ENCODE measurements at regions of chr4 and their contacts with region 1.

Region 1: GRCh38 chr4:108570993-108571569 is 49.3 kb upstream of the RPL34 start:
- DNase-seq: no peak
- H3K4me3 ChIP-seq: no peak overlapping the region
- H3K27ac ChIP-seq: no peak overlapping the region
- H3K4me1 ChIP-seq: no peaks in the 10 kb centered on the region
- H3K27me3 ChIP-seq: no peaks in the 10 kb centered on the region
- CTCF ChIP-seq: no peak

Region 2: GRCh38 chr4:108018040-108018883 is 552.8 kb before region 1 on chr4:
- CTCF ChIA-PET with region 1: interaction called, 4 read pairs
- POLR2A ChIA-PET with region 1: no interaction called
- intact Hi-C with region 1: loop called (anchors 5 kb)
- DNase-seq: peak; percentile 39 to 51
- H3K4me3 ChIP-seq: no peak overlapping the region
- H3K27ac ChIP-seq: no peak overlapping the region
- H3K4me1 ChIP-seq: no peaks in the 10 kb centered on the region
- H3K27me3 ChIP-seq: no peaks in the 10 kb centered on the region
- CTCF ChIP-seq: peak; percentile 80

Region 3: GRCh38 chr4:108030332-108030731 is 540.7 kb before region 1 on chr4:
- CTCF ChIA-PET with region 1: no interaction called
- POLR2A ChIA-PET with region 1: no interaction called
- intact Hi-C with region 1: loop called (anchors 1 kb)
- DNase-seq: peak in 1 of 2 experiments; percentile 15
- H3K4me3 ChIP-seq: no peak overlapping the region
- H3K27ac ChIP-seq: no peak overlapping the region
- H3K4me1 ChIP-seq: no peaks in the 10 kb centered on the region
- H3K27me3 ChIP-seq: no peaks in the 10 kb centered on the region
- CTCF ChIP-seq: peak; percentile 61

Region 4: GRCh38 chr4:108628411-108628810 is 57.3 kb after region 1 on chr4:
- CTCF ChIA-PET with region 1: no interaction called
- POLR2A ChIA-PET with region 1: interaction called, 10 read pairs
- intact Hi-C with region 1: no loop called
- DNase-seq: no peak
- H3K4me3 ChIP-seq: no peak overlapping the region
- H3K27ac ChIP-seq: no peak overlapping the region
- H3K4me1 ChIP-seq: no peaks in the 10 kb centered on the region
- H3K27me3 ChIP-seq: no peaks in the 10 kb centered on the region
- CTCF ChIP-seq: no peak

Measured in PC-9 (cell line).